Activated CD4-positive, alpha-beta T cell treated with anti-CD3 and anti-CD28 coated beads, Interleukin-2, amount 10 ng/mL, durations not matched to agents 24 days and 14 days (primary cell): ENCODE measurements at regions of chr2 and their contacts with region 1.

Region 1: DNA sequence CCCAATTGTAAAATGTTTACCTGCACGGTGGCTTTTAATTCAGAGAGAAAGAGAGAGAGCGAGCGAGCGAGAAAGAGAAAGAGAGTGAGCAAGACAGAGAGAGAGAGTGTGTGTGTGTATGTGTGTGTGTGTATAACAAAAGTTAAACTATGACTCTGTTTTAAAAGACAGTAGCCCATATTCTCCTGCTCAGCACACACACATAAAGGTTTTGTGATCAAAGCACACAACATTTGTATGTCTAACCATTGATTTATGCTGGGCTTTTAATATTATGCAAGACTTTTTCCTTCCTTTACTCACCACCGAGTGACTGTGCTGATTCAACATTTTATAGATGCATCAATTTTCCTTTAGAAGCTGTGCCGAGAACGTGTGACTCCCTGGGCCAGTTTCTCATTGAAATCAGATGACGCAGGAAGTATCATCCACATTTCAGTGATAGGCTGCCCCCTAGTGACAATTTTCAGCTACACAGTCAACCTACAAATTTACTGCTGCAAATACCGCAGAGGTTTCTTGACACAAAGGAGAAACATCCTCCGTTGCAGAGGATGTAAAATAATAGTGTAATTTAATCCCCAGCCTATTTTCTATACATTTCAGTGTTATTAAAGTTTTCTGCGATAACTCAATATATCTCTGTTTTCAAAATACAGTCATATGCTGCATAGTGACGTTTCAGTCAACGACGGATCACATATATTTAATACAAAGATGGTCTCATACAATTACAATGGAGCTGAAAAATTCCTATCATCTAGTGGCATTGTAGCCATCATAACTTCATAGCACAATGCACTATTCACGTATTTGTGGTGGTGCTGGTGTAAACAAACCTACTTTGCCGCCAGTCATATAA is 165.9 kb upstream of the TANK start:
- DNase-seq: peak; percentile 93
- H3K4me3 Mint-ChIP-seq: no peak overlapping the region
- H3K27ac Mint-ChIP-seq: no peak overlapping the region
- H3K4me1 Mint-ChIP-seq: peaks cover 9% of the 10 kb centered on the region
- H3K27me3 Mint-ChIP-seq: peaks cover 4% of the 10 kb centered on the region

Region 2: DNA sequence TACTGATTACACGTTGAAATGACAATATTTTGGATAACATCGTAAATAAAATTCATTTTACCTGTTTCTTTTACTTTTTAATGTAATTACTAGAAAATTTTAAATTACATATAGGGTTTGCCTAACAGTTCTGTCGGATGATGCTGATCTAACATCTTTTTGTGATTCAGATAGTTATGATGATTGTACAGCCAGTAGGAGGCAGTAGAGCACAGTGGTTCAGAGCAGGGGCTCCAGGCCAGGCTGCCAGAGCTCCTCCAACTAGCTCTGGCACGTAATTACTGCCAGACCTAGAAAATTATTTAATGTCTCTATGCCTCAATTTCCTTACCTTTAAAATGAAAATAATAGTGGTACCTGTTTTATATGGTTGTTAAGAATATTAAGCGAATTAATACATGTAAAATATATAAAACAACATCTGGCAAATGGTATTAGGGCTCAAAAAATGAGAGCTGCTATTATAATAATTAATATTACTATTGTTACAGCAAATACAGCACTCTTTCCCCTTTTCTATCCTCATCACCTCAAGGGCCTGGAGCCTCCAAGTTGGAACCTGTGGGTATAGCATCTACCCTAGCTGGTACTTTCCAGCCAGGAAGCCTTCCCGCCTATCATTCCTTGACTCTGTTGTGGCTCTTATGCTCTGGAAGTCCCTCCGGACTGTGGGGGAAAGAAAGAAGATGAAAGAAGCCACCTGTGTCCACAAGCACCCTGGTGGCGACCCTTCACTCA is 884.3 kb before region 1 on chr2:
- intact Hi-C with region 1: loop called (anchors 1 kb)
- DNase-seq: peak; percentile 83
- H3K4me3 Mint-ChIP-seq: no peak overlapping the region
- H3K27ac Mint-ChIP-seq: no peak overlapping the region
- H3K4me1 Mint-ChIP-seq: no peaks in the 10 kb centered on the region
- H3K27me3 Mint-ChIP-seq: peaks cover 2% of the 10 kb centered on the region

Region 3: DNA sequence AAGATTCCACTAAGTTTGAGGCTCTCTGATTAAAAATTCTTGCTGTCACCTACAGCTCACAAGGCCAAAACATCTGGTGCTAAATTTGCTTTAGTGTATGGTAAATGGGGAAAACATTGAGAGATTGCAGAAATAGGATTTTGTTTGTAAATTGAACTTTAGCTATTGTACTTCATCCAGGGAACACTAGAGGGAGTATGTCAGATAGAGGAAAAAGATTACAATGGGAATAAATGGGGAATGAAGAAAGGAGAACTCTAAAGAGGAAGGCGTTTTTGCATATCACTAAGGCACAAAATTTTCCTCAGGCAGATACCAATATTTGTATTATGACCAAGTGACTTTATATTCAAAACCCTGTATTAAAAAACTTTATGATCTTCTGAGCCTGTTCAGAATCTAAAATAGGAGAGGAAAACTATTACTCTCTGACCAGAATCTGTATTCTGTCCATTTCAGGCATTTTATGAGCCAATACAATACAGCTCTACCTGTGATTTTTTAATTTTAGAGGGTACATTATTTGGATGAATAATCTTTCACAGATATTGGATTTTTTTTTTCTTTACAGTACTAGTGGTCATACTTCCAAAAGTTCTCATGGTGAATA is 742.0 kb before region 1 on chr2:
- intact Hi-C with region 1: loop called (anchors 1 kb)
- DNase-seq: no peak
- H3K4me3 Mint-ChIP-seq: no peak overlapping the region
- H3K27ac Mint-ChIP-seq: no peak overlapping the region
- H3K4me1 Mint-ChIP-seq: no peaks in the 10 kb centered on the region
- H3K27me3 Mint-ChIP-seq: peaks cover 14% of the 10 kb centered on the region

Region 4: GRCh38 chr2:160970052-160970965 is 24.1 kb before region 1 on chr2:
- intact Hi-C with region 1: no loop called
- DNase-seq: no peak
- H3K4me3 Mint-ChIP-seq: no peak overlapping the region
- H3K27ac Mint-ChIP-seq: no peak overlapping the region
- H3K4me1 Mint-ChIP-seq: no peaks in the 10 kb centered on the region
- H3K27me3 Mint-ChIP-seq: peaks cover 21% of the 10 kb centered on the region

Region 5: GRCh38 chr2:161273038-161273760 is 278.8 kb after region 1 on chr2:
- intact Hi-C with region 1: loop called (anchors 10 kb)
- DNase-seq: peak; percentile 83
- H3K4me3 Mint-ChIP-seq: no peak overlapping the region
- H3K27ac Mint-ChIP-seq: no peak overlapping the region
- H3K4me1 Mint-ChIP-seq: peaks cover 2% of the 10 kb centered on the region
- H3K27me3 Mint-ChIP-seq: peaks cover 17% of the 10 kb centered on the region